ENCODE measurements at regions of chr1 and their contacts with region 1.

Region 1: GRCh38 chr1:19311959-19312781 is at the starts of genes AKR7A2 and SLC66A1:
- DNase-seq: peak; percentile 99

Region 2: DNA sequence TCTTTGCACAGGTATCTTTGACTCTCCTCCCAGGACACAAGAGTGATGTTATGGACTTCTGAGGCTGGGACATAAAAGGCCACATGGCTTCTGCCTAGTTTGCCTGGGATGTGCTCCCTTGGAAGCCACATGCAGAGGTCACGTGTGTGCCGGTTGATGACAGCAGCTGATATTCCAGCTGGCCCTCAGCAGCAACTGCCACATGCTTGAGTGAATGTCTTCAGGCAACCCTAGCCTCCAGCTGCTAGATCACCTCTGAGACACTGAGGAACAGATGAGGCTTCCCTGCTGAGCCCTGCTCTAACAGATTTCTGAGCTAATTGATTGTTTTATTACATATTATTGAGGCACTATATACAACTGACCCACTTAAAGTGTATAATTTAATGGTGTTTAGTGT is 12.0 kb before region 1 on chr1:
- CTCF ChIA-PET with region 1: no interaction called
- POLR2A ChIA-PET with region 1: interaction called, 12 read pairs
- DNase-seq: no peak

Measured in HEK293T (cell line).